HCT116 (cell line): ENCODE measurements at regions of chr1 and their contacts with region 1.

Region 1: DNA sequence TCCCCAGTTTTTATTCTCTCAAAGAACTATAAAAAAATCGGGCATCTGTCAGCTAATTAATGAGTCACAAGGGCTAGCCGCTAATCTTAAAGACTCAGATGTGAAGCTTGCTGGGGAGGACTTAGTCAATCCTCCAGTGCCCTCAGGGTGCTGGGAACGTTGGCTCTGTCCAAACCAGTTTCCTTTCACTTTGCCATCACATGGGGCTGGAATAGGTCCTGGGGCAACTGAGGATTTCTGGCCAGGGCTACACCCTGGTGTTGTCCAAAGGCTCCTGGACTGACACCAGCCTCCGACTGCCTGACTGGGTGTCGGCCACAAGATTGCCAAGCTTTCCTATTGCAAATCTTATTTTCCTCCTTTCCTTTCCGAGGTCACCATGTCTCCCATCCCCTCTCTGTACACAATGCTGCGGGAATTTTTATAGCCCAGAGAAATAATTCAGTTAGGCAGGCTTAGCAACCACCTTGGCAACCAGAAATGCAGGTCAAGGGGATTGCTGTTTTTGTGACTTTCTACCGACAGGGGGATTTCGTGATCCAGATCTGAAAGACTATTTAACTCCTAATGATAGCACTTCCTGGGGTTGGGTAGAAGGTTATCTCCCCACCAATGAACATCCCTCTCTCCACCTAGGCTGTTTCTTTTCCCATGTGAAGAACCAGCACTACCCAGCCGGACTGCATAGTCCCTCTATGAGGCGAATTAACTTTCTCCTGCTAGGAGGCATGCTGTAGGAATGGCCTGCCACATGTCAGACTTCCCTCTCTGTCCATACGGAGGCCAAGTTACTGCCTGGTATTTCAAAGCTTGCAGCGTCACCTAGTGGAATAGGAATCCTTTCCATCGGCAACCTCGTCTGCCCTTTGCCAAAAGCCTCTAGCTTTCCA is 29.9 kb upstream of the CTBS start:
- DNase-seq: peak; percentile 73
- ATAC-seq: peak; percentile 77
- H3K4me3 ChIP-seq: peak overlapping the region; percentile 24 to 52
- H3K27ac ChIP-seq: peak overlapping the region; percentile 69
- H3K4me1 ChIP-seq: peaks cover 32 to 52% of the 10 kb centered on the region in 2 experiments
- H3K27me3 ChIP-seq: no peaks in the 10 kb centered on the region
- CTCF ChIP-seq: peak; percentile 67 to 87 (median 81)
- POLR2A ChIP-seq: no peak
- RAD21 ChIP-seq: peak; percentile 96

Region 2: DNA sequence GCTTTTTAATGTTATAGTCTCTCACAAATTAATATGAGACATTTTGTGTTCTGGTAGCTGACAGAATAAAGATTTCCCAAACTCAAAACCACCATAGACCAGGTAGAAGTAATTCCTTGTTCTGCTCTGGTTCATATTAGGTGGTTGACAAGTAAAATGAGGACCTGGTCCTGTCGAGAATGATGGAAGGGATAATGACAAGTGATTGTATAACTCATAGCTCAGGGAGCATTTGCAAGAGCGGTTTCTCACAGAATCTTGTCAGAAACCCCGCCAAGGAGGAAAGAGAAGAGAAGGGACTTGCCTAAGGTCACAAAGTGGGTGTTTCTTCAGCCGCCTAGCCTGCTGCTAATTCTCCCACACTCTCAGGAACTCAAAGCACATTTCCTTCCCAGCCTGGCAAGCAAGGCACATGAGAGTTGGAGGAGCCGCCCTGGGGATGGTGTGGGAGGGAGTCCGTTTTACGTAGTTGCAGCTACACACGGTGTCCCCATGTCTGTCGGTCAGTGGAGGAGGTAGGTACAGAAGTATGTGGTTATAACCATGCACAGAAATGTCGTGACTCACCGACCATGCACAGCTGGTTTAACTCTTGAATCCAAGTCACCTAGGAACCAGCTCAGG is 256.1 kb before region 1 on chr1:
- CTCF ChIA-PET with region 1: no interaction called
- POLR2A ChIA-PET with region 1: no interaction called
- RAD21 ChIA-PET with region 1: no interaction called
- intact Hi-C with region 1: loop called (anchors 5 kb)
- DNase-seq: peak; percentile 94
- ATAC-seq: peak; percentile 90
- H3K4me3 ChIP-seq: peak overlapping the region; percentile 24 to 48
- H3K27ac ChIP-seq: peak overlapping the region; percentile 97
- H3K4me1 ChIP-seq: peaks cover 79 to 82% of the 10 kb centered on the region in 2 experiments
- H3K27me3 ChIP-seq: no peaks in the 10 kb centered on the region
- CTCF ChIP-seq: no peak
- POLR2A ChIP-seq: peak; percentile 60
- RAD21 ChIP-seq: peak; percentile 33; the same call in 1 of the 2 replicates

Region 3: DNA sequence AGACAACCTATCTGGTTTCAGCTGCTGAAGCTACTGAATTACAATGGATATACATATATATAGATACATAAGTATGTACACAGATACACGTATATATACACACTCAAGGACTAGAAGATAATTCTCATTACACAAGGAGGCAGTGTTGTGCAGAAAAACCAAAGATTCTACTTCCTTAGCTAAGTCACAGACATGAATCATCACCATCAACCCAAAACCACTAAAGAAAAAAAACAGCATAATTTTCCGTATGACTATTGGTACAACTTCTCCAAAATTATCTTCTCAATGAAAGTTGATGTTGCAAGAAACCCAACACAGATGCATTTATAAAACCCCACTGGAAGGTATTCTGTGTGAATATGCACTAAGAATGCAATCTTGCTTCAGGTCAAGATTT is 161.9 kb before region 1 on chr1:
- CTCF ChIA-PET with region 1: interaction called, 14 read pairs
- POLR2A ChIA-PET with region 1: no interaction called
- RAD21 ChIA-PET with region 1: interaction called in 1 of 2 experiments, 6 read pairs
- intact Hi-C with region 1: loop called (anchors 2 kb)
- DNase-seq: peak; percentile 67
- ATAC-seq: peak; percentile 93
- H3K4me3 ChIP-seq: no peak overlapping the region
- H3K27ac ChIP-seq: no peak overlapping the region
- H3K4me1 ChIP-seq: peaks cover 6 to 20% of the 10 kb centered on the region in 2 experiments; a peak in 3 of 4 replicates
- H3K27me3 ChIP-seq: no peaks in the 10 kb centered on the region
- CTCF ChIP-seq: peak; percentile 21 to 76 (median 57); a peak in 5 of 6 replicates
- POLR2A ChIP-seq: no peak
- RAD21 ChIP-seq: peak; percentile 85

Region 4: DNA sequence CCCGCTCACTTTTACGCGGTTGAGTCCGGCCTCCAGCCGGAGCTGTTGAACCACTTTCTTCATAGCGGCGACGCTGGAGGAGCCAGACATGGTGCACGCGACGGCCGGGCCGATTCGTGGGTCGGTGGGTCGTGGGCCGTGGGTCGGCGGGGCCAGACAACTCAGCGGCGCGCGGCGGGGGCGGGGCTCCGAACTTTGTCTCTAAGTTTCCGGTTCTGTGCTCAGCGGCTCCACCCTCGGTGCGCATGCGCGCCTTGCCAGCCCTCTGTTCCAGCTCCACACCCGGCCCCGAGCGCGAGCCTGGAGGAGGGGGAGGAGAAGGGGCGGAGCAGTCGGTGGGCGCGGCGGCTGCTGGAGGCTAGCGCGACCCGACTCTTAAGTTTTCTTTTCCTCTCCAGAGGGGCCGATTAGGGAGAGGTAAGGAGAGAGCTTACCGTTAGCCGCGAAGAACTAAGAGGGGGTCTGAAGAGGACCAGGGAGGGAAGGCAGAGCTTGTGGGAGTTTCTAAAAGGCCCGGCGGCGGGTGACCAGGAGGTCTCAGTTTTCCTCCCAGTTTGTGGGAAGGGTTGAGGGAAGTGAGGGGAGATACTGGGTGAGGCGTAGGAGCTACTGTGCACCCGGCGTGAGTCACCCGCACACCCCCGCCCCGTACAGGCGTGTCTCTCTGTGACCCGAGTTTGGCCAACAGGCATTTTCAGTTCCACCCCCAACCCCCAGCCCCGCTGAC is 98.0 kb before region 1 on chr1 and contains the starts of genes GNG5 and SPATA1:
- CTCF ChIA-PET with region 1: no interaction called
- POLR2A ChIA-PET with region 1: no interaction called
- RAD21 ChIA-PET with region 1: interaction called in 1 of 2 experiments, 3 read pairs
- intact Hi-C with region 1: loop called (anchors 10 kb)
- DNase-seq: peak; percentile 91
- ATAC-seq: peak; percentile 90
- H3K4me3 ChIP-seq: peak within 1 kb of the TSS; percentile 83 to 85
- H3K27ac ChIP-seq: peak within 1 kb of the TSS; percentile 83
- H3K4me1 ChIP-seq: peaks cover 21 to 38% of the 10 kb centered on the region in 2 experiments
- H3K27me3 ChIP-seq: no peaks in the 10 kb centered on the region
- CTCF ChIP-seq: no peak
- POLR2A ChIP-seq: no peak
- RAD21 ChIP-seq: no peak; the same call in 1 of the 2 replicates
- total RNA-seq, gene GNG5: 193 TPM
- total RNA-seq, gene SPATA1: 3.1 TPM

Region 5: GRCh38 chr1:84620720-84621313 is 16.6 kb after region 1 on chr1:
- CTCF ChIA-PET with region 1: interaction called, 16 read pairs
- POLR2A ChIA-PET with region 1: no interaction called
- RAD21 ChIA-PET with region 1: no interaction called
- intact Hi-C with region 1: no loop called
- DNase-seq: peak; percentile 71
- ATAC-seq: peak; percentile 93
- H3K4me3 ChIP-seq: peak overlapping the region; percentile 47 to 62
- H3K27ac ChIP-seq: peak overlapping the region; percentile 91
- H3K4me1 ChIP-seq: peaks cover 18 to 25% of the 10 kb centered on the region in 2 experiments
- H3K27me3 ChIP-seq: no peaks in the 10 kb centered on the region
- CTCF ChIP-seq: peak; percentile 72 to 99 (median 92)
- POLR2A ChIP-seq: no peak
- RAD21 ChIP-seq: peak; percentile 87

Region 6: DNA sequence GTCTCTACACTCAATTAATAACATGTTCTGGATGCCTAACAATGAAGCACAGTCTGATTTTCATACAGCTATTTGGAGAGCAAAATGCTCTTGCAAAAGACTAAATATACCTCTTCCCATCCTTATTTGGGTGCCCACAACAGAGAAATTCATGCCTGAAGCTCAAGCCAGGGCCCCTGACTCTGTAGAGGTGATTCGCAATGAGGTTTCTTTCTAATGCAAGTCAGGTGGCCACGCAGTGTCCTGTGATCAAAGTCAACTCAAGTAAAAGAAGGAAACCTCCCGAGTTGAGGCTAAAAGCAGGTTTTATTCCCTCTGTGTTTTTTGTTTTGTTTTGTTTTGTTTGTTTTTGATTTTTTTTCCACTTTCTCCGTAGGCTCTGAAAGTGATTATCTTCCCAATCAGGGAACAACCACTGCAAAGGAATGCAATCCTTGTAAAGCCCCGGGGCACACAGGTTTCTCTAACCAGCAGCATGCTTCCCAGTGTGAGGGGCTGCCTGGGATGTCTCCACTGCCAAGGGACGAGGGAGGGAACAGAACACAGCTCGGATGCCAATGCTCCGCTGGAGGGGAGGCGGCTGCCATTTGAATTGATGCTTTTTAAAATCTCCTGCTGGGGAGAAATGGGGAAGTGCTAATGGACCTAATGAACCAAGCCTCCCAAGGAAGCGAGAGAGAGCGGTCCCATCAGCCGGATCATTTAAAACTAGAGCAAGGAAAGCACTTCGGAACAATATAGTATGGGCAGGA is 159.9 kb after region 1 on chr1:
- CTCF ChIA-PET with region 1: no interaction called
- POLR2A ChIA-PET with region 1: no interaction called
- RAD21 ChIA-PET with region 1: no interaction called
- intact Hi-C with region 1: no loop called
- DNase-seq: no peak
- ATAC-seq: no peak
- H3K4me3 ChIP-seq: no peak overlapping the region
- H3K27ac ChIP-seq: no peak overlapping the region
- H3K4me1 ChIP-seq: no peaks in the 10 kb centered on the region
- H3K27me3 ChIP-seq: no peaks in the 10 kb centered on the region
- CTCF ChIP-seq: no peak
- POLR2A ChIP-seq: no peak
- RAD21 ChIP-seq: no peak

Region 7: DNA sequence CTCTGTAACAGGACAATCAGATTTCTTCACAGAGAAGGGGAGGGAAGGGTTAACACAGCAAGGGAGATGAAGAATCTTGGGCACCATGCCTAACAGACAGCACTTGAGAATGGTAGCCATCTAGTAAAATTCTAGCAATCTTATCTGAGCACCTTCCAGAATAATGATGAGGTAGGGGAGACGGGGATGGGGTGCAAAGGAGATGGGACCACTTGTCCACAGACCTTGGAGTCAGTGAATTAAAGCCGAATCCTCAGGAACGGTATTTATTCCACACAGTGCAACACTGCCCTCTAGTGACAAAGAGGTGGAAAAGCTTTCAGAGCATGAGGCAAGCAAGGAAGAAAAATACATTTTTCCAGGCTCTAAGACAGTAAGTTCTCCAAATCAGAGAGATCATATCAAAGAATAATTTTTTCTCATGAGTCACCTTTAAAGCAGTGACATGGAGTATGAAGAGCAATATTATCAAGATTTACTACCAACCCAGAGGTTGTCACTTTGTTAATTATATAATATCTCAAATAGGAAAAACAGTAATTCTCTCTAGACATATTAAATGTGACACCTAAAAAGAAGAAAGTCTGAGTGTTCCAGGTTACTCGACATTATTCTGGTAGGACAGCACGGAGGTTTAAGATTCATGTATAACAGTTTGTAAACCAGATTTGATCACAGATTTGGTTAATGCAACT is 332.1 kb after region 1 on chr1:
- CTCF ChIA-PET with region 1: no interaction called
- POLR2A ChIA-PET with region 1: no interaction called
- RAD21 ChIA-PET with region 1: no interaction called
- intact Hi-C with region 1: loop called (anchors 10 kb)
- DNase-seq: peak; percentile 39
- ATAC-seq: peak; percentile 83
- H3K4me3 ChIP-seq: no peak overlapping the region
- H3K27ac ChIP-seq: no peak overlapping the region
- H3K4me1 ChIP-seq: no peaks in the 10 kb centered on the region
- H3K27me3 ChIP-seq: no peaks in the 10 kb centered on the region
- CTCF ChIP-seq: peak; percentile 71 to 95 (median 90); a peak in 5 of 6 replicates
- POLR2A ChIP-seq: no peak
- RAD21 ChIP-seq: peak; percentile 92